ENCODE measurements at regions of chr16 and their contacts with region 1.

Region 1: GRCh38 chr16:77951775-77952174 is 70.6 kb upstream of the CLEC3A start:
- DNase-seq: peak; percentile 22
- H3K4me3 ChIP-seq: no peak overlapping the region
- H3K27ac ChIP-seq: no peak overlapping the region
- H3K4me1 ChIP-seq: peaks cover 0 to 3% of the 10 kb centered on the region in 2 experiments; a peak in 1 of 4 replicates
- H3K27me3 ChIP-seq: no peaks in the 10 kb centered on the region
- CTCF ChIP-seq: peak; percentile 38
- EP300 ChIP-seq: no peak
- RAD21 ChIP-seq: peak; percentile 27

Region 2: DNA sequence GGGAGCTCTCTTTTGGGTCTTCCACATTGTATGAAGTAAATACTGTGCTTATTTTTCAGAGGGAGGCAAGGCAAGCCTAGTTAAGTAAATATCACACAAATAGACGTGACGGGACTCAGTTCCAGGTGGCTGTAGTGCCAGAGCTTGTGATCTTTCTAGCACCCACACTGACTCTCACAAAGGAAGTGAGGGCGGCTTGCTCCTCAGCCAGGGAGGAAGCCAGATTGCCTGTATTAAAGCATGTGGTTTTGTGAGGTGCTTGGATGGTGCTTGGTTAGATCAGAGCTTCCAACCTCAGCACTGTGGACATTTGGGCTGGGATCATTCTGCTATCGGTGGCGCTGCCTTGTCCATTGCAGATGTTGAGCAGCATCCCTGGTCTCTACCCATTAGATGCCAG is 83.3 kb before region 1 on chr16:
- CTCF ChIA-PET with region 1: no interaction called
- POLR2A ChIA-PET with region 1: no interaction called
- DNase-seq: no peak
- H3K4me3 ChIP-seq: no peak overlapping the region
- H3K27ac ChIP-seq: no peak overlapping the region
- H3K4me1 ChIP-seq: no peaks in the 10 kb centered on the region; a peak in 1 of 4 replicates
- H3K27me3 ChIP-seq: no peaks in the 10 kb centered on the region
- CTCF ChIP-seq: no peak
- EP300 ChIP-seq: no peak
- RAD21 ChIP-seq: no peak

Region 3: GRCh38 chr16:77938914-77939313 is 12.9 kb before region 1 on chr16:
- CTCF ChIA-PET with region 1: interaction called, 17 read pairs
- POLR2A ChIA-PET with region 1: no interaction called
- DNase-seq: no peak
- H3K4me3 ChIP-seq: no peak overlapping the region
- H3K27ac ChIP-seq: no peak overlapping the region
- H3K4me1 ChIP-seq: no peaks in the 10 kb centered on the region
- H3K27me3 ChIP-seq: no peaks in the 10 kb centered on the region
- CTCF ChIP-seq: no peak
- EP300 ChIP-seq: no peak
- RAD21 ChIP-seq: no peak

Measured in SK-N-SH (cell line).